Activated CD8-positive, alpha-beta T cell treated with anti-CD3 and anti-CD28 coated beads for 36 hours (primary cell): ENCODE measurements at regions of chr1 and their contacts with region 1.

Region 1: DNA sequence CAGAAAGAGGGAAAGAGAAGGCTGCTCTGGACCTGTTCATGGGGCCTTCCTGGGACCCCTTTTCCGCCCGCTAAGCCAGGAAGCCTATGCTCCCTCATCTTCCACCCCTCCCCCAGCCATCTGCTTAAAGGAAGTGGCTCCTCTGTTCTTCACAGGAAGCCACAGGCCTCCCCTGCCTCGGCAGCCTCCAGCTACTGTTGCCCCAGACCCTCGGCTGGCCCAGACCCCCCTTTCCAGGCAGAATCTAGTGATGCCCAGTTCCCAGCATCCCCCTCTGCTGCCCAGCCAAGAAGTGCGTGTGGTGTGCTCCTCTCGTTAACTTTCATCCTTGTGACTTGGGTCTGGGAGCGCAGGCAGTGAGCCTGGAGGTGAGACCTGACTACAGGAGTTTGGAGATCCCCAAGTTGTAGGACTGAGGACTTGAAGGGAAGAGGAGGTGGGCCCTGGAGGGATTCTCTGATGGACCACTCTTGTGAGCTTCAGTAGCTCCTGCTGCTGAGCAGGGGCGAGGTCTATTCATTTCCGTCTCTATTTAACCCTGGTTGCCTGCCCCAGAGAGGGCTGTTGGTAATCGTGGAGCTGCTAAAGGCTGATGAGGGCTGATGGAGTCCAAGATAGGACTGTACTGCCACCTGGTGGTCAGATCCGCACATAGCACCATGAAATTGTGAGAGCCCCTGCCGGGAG is 9.1 kb downstream of the IFI6 start:
- DNase-seq: peak; percentile 96
- ATAC-seq: peak; percentile 80
- H3K4me3 Mint-ChIP-seq: peak overlapping the region; percentile 68
- H3K27ac Mint-ChIP-seq: peak overlapping the region; percentile 98
- H3K4me1 Mint-ChIP-seq: peaks cover 50% of the 10 kb centered on the region
- H3K27me3 Mint-ChIP-seq: no peaks in the 10 kb centered on the region
- CTCF ChIP-seq: peak; percentile 75

Region 2: GRCh38 chr1:27349784-27350662 is 312.8 kb before region 1 on chr1:
- CTCF ChIA-PET with region 1: no interaction called
- POLR2A ChIA-PET with region 1: no interaction called
- intact Hi-C with region 1: no loop called
- DNase-seq: no peak
- ATAC-seq: peak; percentile 28
- H3K4me3 Mint-ChIP-seq: no peak overlapping the region
- H3K27ac Mint-ChIP-seq: no peak overlapping the region
- H3K4me1 Mint-ChIP-seq: peaks cover 19% of the 10 kb centered on the region
- H3K27me3 Mint-ChIP-seq: no peaks in the 10 kb centered on the region
- CTCF ChIP-seq: no peak

Region 3: GRCh38 chr1:27632387-27633297 is 30.2 kb before region 1 on chr1:
- CTCF ChIA-PET with region 1: interaction called, 18 read pairs
- POLR2A ChIA-PET with region 1: interaction called, 8 read pairs
- intact Hi-C with region 1: no loop called
- DNase-seq: peak; percentile 91
- ATAC-seq: peak; percentile 73
- H3K4me3 Mint-ChIP-seq: peak overlapping the region; percentile 57
- H3K27ac Mint-ChIP-seq: peak overlapping the region; percentile 84
- H3K4me1 Mint-ChIP-seq: peaks cover 71% of the 10 kb centered on the region
- H3K27me3 Mint-ChIP-seq: no peaks in the 10 kb centered on the region
- CTCF ChIP-seq: no peak

Region 4: DNA sequence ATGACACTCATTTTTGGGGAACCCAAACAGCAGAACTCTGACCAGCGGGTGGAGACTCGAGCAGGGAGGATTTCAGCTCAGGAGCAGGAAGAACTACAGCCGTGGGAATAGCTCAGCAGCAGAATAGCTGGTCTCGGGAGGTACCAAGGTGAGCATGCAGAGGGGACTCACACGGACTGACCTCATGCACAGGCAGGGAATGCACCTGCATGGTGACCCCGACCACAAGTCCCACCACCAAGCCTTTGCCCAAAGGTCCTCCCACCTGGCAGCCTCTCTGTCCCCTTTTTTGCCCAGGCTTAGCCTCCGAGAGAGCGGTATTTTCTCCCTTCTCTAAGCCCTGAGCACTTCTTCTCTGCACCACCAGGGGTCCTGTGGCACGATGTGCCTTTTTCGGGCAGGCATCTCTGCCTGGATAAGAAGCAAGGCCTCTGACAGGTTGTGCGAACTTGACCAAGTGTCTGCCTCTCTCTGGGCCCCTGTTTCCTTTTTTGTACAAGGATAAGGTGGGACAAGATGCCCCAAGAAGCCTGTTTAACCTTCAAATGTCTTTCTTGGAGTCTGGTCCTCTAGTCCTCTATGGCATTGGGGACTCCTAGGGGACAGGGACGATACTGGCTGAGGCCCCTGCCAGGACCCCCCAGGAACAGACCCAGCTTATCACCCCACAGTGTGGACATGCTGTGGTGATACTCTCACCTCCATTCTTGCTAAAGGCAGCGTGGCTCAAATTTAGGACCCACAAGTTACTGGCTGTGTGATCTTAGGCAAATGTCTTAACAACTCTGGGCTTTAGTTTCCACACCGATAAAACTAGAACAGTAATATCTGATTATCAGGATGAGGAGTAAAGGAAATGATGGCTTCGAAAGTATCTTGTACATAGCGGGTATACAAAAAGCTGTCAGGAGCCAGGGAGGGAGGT is 18.9 kb before region 1 on chr1:
- CTCF ChIA-PET with region 1: interaction called, 23 read pairs
- POLR2A ChIA-PET with region 1: interaction called, 12 read pairs
- intact Hi-C with region 1: no loop called
- DNase-seq: peak; percentile 81
- ATAC-seq: peak; percentile 99
- H3K4me3 Mint-ChIP-seq: no peak overlapping the region
- H3K27ac Mint-ChIP-seq: peak overlapping the region; percentile 42
- H3K4me1 Mint-ChIP-seq: peaks cover 14% of the 10 kb centered on the region
- H3K27me3 Mint-ChIP-seq: no peaks in the 10 kb centered on the region
- CTCF ChIP-seq: peak; percentile 91

Region 5: DNA sequence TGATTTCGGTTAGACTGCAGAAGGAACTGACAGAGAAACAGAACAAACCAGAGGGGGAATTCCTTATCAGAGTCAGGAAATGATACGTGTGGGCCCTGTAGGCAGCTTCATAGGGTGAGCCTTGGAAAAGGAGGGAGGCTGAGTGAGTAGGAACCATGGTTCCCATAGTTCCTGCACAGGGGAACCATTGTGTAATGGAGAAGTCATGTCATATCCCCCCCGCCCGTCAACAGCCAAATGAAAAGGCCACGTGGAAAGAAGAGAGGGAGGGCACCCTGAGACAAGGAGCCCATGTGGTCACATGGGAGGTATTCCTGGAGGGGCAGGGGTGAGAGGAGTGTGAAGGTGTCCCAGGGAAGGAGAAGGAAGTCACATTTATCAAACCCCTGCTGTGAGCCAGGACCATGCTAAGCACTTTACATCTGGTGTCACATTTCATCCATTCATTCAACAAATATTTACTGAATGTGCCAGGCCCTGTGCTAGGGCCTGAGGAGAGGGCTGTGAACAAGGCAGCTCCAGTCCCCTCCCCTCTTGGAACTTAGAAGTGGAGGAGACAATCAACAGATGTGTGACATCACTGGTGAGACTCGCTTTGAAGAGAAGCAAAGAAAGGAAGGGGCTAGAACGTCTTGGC is 12.2 kb before region 1 on chr1:
- CTCF ChIA-PET with region 1: interaction called, 12 read pairs
- POLR2A ChIA-PET with region 1: interaction called, 12 read pairs
- intact Hi-C with region 1: no loop called
- DNase-seq: no peak
- ATAC-seq: peak; percentile 45
- H3K4me3 Mint-ChIP-seq: no peak overlapping the region
- H3K27ac Mint-ChIP-seq: peak overlapping the region; percentile 67
- H3K4me1 Mint-ChIP-seq: peaks cover 17% of the 10 kb centered on the region
- H3K27me3 Mint-ChIP-seq: no peaks in the 10 kb centered on the region
- CTCF ChIP-seq: no peak

Region 6: GRCh38 chr1:27727126-27727525 is 64.3 kb after region 1 on chr1:
- CTCF ChIA-PET with region 1: no interaction called
- POLR2A ChIA-PET with region 1: no interaction called
- intact Hi-C with region 1: no loop called
- DNase-seq: no peak
- ATAC-seq: no peak
- H3K4me3 Mint-ChIP-seq: peak overlapping the region; percentile 80
- H3K27ac Mint-ChIP-seq: no peak overlapping the region
- H3K4me1 Mint-ChIP-seq: peaks cover 24% of the 10 kb centered on the region
- H3K27me3 Mint-ChIP-seq: no peaks in the 10 kb centered on the region
- CTCF ChIP-seq: no peak